Activated CD4-positive, alpha-beta T cell treated with anti-CD3 and anti-CD28 coated beads, Interleukin-2, amount 10 ng/mL, durations not matched to agents 7 days and 5 days (primary cell): ENCODE measurements at regions of chr17 and their contacts with region 1.

Region 1: GRCh38 chr17:34980681-34981537 is 597 bp downstream of the LIG3 start:
- DNase-seq: peak; percentile 81
- H3K4me3 Mint-ChIP-seq: peak overlapping the region; percentile 87
- H3K27ac Mint-ChIP-seq: peak overlapping the region; percentile 97
- H3K4me1 Mint-ChIP-seq: peaks cover 39% of the 10 kb centered on the region
- H3K27me3 Mint-ChIP-seq: no peaks in the 10 kb centered on the region

Region 2: GRCh38 chr17:34820922-34821321 is 160.0 kb before region 1 on chr17:
- CTCF ChIA-PET with region 1: no interaction called
- POLR2A ChIA-PET with region 1: no interaction called
- DNase-seq: no peak
- H3K4me3 Mint-ChIP-seq: no peak overlapping the region
- H3K27ac Mint-ChIP-seq: no peak overlapping the region
- H3K4me1 Mint-ChIP-seq: peaks cover 5% of the 10 kb centered on the region
- H3K27me3 Mint-ChIP-seq: no peaks in the 10 kb centered on the region

Region 3: DNA sequence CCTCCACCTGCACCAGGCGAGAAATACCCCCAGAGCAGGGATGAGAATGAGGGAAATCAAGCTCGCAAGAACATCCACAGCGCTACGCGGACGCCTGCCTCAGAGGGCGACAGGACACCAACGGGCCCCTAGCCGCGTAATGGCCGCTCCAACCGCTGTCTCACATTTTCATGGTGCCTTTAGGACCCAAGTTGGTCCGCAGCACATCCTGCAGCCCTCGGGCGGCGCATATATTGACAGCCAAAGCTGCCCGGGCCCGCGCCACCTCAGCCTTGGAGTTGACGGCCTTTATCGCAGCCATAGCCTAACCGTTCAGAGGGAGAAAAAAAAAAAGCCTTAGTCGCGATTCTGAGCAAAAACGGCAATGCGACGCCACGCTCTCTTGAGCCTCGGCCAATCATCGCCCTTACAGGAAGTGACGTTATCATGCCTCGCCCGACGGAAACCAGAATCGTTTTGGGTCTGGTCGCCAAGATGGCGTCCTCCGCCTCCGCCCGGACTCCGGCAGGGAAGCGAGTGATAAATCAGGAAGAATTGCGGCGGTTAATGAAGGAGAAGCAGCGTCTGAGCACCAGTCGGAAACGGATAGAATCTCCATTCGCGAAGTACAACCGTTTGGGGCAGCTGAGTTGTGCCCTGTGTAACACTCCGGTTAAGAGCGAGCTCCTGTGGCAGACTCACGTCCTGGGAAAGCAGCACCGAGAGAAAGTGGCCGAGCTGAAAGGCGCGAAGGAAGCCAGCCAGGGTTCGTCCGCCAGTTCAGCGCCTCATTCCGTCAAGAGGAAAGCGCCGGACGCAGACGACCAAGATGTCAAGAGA is 19.6 kb before region 1 on chr17 and contains the starts of genes CCT6B and ZNF830:
- CTCF ChIA-PET with region 1: interaction called, 11 read pairs
- POLR2A ChIA-PET with region 1: no interaction called
- DNase-seq: peak; percentile 95
- H3K4me3 Mint-ChIP-seq: peak within 1 kb of the TSS; percentile 99
- H3K27ac Mint-ChIP-seq: peak within 1 kb of the TSS; percentile 99
- H3K4me1 Mint-ChIP-seq: peaks cover 35% of the 10 kb centered on the region
- H3K27me3 Mint-ChIP-seq: peaks cover 4% of the 10 kb centered on the region
- total RNA-seq, gene CCT6B: 1.7 to 2.0 TPM
- total RNA-seq, gene ZNF830: 24.4 to 25.0 TPM

Region 4: GRCh38 chr17:35038453-35038852 is 57.5 kb after region 1 on chr17:
- CTCF ChIA-PET with region 1: no interaction called
- POLR2A ChIA-PET with region 1: no interaction called
- DNase-seq: no peak
- H3K4me3 Mint-ChIP-seq: no peak overlapping the region
- H3K27ac Mint-ChIP-seq: no peak overlapping the region
- H3K4me1 Mint-ChIP-seq: peaks cover 9% of the 10 kb centered on the region
- H3K27me3 Mint-ChIP-seq: no peaks in the 10 kb centered on the region